ENCODE measurements at regions of chr19 and their contacts with region 1.

Region 1: GRCh38 chr19:18167975-18168645 is 5.5 kb upstream of the IFI30 start:
- DNase-seq: peak; percentile 74
- H3K4me3 Mint-ChIP-seq: no peak overlapping the region
- H3K27ac Mint-ChIP-seq: no peak overlapping the region
- H3K4me1 Mint-ChIP-seq: peaks cover 4% of the 10 kb centered on the region
- H3K27me3 Mint-ChIP-seq: no peaks in the 10 kb centered on the region

Region 2: GRCh38 chr19:18109733-18110595 is 58.1 kb before region 1 on chr19:
- CTCF ChIA-PET with region 1: interaction called, 27 read pairs
- POLR2A ChIA-PET with region 1: interaction called, 4 read pairs
- DNase-seq: peak; percentile 57
- H3K4me3 Mint-ChIP-seq: peak overlapping the region; percentile 69
- H3K27ac Mint-ChIP-seq: no peak overlapping the region
- H3K4me1 Mint-ChIP-seq: peaks cover 26% of the 10 kb centered on the region
- H3K27me3 Mint-ChIP-seq: peaks cover 6% of the 10 kb centered on the region

Region 3: DNA sequence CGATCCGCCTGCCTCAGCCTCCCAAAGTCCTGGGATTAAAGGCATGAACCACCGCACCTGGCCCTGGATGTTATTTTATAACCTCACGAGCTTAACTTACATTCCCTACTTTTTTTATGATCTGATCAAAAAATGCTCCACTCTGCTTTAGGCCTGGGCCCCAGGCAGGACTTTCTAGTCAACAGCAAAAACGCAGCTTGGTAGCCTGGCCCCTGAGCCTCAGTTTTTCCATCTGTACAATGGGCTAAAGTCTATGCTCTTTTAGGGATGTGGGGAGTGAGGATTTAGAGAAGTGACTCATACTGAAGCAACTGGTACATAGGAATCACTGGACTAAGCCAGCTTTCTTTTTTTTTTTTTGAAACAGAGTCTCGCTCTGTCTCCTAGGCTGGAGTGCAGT is 27.1 kb before region 1 on chr19:
- CTCF ChIA-PET with region 1: no interaction called
- POLR2A ChIA-PET with region 1: no interaction called
- DNase-seq: no peak
- H3K4me3 Mint-ChIP-seq: no peak overlapping the region
- H3K27ac Mint-ChIP-seq: no peak overlapping the region
- H3K4me1 Mint-ChIP-seq: no peaks in the 10 kb centered on the region
- H3K27me3 Mint-ChIP-seq: no peaks in the 10 kb centered on the region